Kidney (tissue), 22 donors: ENCODE measurements at regions of chr7 and their contacts with region 1.

Region 1: GRCh38 chr7:43249823-43250145 is 137.3 kb downstream of the HECW1 start:
- DNase-seq: no peak
- H3K4me3 ChIP-seq: no peak overlapping the region
- H3K27ac ChIP-seq: no peak overlapping the region
- H3K4me1 ChIP-seq: no peaks in the 10 kb centered on the region
- H3K27me3 ChIP-seq: no peaks in the 10 kb centered on the region
- CTCF ChIP-seq: no peak

Region 2: DNA sequence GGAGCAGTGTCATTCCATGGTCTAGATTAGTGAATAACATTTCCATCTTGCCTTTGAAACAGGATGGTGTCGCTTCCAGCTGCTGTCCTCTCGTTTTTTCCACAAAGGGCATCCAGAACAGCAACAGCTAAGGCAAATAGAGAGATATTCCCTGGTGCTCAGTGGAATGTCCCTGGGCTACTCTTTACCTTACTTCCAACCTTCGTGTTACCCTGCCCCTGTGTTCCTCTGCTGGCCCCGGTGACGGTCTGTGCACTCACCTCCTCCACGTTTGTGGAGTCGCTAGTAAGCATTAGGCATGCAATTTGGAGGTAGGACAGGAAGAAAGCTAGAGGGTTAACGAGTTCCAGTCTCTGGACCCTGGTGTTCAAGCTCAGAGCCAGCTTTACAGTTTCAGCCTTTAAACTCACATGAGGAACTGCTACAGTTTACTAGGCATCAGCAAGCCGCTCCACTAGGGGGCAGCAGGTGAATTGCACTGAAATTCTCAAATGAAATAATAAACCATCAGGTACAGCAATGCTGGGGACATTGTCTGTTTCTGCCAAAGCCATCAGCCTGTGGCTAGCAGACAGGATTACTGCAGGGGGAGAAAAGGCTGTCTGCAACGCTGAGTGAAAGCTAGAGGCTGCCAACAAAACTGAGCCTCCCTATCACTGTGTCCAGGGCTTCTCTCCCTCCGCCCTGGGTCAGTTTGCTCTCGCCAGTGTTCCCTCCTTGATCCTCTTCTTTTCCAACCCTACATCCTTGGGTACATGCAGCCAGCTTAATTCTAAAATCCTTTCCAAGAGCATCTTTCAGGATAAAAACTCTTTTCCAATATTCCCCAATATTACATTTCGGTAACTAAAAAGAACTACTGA is 308.6 kb before region 1 on chr7:
- intact Hi-C with region 1: loop called (anchors 10 kb)
- DNase-seq: peak; percentile 86 to 92 (median 86)
- H3K4me3 ChIP-seq: no peak overlapping the region
- H3K27ac ChIP-seq: no peak overlapping the region
- H3K4me1 ChIP-seq: no peaks in the 10 kb centered on the region
- H3K27me3 ChIP-seq: no peaks in the 10 kb centered on the region
- CTCF ChIP-seq: peak; percentile 94

Region 3: DNA sequence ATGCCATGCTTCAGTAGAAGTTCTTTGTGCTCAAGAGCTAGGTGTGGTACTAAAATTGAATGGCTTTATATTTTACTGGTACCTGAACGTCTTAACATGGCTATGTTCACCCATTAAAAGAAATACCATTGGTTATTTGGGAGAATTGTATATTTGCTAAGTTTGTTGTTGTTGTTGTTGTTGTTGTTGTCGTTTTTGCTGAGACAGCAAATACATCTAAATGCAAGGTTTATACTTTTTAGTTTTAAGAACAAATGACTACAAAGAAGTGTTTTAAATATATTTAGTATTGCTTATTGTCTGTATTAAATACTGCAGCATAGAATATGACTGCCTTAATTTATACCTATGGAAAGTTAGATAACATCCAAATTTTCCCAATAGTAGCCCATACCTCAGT is 70.4 kb before region 1 on chr7:
- intact Hi-C with region 1: no loop called
- DNase-seq: no peak
- H3K4me3 ChIP-seq: no peak overlapping the region
- H3K27ac ChIP-seq: no peak overlapping the region
- H3K4me1 ChIP-seq: no peaks in the 10 kb centered on the region
- H3K27me3 ChIP-seq: no peaks in the 10 kb centered on the region
- CTCF ChIP-seq: no peak

Region 4: DNA sequence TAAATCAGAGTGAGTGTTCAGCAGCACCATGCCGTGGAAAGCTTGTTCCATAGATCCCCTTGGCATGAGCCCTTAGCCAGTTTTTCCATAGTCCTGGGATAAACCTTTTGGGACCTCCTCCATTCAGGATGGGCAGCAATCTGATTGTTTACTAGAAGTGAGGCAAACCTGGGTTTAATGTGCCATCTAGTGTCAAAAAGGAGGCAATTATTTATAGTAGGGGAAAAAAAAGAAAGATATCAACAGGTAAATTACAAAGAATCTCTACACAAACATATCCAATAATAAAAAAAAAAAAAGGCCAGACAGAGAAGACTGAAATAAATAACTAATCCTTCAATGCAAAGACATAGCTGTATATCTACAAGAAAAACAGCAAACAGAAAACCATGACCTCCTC is 104.1 kb after region 1 on chr7:
- intact Hi-C with region 1: no loop called
- DNase-seq: no peak
- H3K4me3 ChIP-seq: no peak overlapping the region
- H3K27ac ChIP-seq: no peak overlapping the region
- H3K4me1 ChIP-seq: no peaks in the 10 kb centered on the region
- H3K27me3 ChIP-seq: no peaks in the 10 kb centered on the region
- CTCF ChIP-seq: no peak